ENCODE measurements at regions of chr3 and their contacts with region 1.

Region 1: DNA sequence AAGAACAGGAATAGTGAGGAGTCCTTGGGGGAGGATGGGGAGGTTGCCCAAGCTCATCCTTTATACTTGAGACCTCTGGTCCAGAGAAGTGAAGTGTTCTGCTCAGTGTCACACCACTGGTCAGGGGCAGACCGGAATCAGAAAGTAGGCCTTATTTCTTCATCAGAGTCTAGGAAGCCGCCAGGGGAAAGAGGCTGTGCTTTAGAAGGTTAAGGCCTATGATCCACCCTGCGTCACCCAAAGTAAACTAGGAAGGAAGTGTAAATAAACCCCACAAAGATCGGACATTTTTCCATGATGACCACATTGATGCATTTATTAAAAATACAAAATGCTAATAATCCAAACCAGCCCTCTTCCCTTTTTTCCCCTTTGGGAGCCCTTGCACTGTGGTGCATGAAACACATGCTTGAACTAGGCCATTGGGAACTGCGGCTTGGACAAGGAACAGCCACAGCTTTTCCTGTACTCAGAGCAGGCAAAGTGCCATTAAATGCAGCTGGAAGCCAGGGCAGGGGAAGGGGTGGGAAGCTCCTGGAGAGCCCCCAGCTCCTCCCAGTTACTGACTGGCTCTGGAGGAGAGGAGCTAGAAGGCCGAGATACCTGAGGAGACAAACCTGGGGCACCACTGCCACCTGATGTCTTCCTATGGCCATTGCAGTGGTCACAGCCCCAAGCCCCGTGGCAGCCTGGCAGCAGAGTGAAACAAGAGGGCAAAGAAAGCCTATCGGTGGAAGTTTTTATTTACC is 37.0 kb downstream of the CDC25A start:
- DNase-seq: peak; percentile 83

Region 2: DNA sequence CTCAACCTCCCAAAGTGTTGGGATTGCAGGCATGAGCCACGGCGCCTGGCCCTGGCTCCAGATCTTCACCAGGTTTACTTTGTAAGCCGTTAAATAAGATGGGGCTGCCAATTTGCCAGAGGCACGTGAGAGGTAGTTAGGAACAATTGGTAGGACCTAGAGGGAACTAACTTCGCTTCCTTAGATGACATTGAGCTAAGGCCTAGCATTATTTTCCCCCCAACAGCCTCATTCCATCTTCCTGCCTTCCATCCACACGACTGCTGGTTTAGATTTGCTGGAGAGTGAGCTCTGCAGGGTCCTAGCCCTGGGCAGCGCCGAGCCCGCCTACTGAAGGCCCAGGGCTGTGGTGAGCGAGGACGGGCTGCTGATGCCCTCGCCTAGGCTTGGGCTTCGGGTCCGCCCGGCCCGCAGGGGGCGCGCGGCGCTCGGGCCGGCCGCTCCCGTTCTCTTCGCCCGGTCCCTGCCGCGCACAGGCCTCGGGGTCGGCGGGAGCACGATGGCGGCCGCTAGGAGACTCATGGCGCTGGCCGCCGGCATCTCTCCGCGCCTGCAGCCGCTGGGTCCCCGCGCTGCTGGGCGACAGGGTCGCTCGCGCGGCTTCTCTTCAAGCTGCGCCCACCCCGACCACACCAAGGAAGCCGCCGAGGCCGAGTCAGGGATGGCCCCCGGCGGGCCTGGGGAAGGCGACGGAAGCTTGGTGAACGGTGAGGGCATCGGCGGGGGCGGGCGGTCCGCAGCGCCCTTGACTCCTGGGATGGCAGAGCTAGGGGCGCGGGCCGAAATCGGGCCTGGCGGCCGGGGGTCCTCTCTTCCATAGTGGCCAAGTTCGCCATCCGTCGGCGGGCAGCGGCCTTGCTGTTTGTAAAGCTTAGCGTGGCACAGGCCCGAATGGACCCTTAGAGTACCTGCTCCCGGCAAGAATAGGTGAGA is 326.4 kb before region 1 on chr3:
- in situ Hi-C with region 1: loop called (anchors 25 kb)
- DNase-seq: peak; percentile 88

Measured in KBM-7 (cell line).